Activated CD4-positive, alpha-beta T cell treated with anti-CD3 and anti-CD28 coated beads for 36 hours (primary cell): ENCODE measurements at regions of chr7 and their contacts with region 1.

Region 1: DNA sequence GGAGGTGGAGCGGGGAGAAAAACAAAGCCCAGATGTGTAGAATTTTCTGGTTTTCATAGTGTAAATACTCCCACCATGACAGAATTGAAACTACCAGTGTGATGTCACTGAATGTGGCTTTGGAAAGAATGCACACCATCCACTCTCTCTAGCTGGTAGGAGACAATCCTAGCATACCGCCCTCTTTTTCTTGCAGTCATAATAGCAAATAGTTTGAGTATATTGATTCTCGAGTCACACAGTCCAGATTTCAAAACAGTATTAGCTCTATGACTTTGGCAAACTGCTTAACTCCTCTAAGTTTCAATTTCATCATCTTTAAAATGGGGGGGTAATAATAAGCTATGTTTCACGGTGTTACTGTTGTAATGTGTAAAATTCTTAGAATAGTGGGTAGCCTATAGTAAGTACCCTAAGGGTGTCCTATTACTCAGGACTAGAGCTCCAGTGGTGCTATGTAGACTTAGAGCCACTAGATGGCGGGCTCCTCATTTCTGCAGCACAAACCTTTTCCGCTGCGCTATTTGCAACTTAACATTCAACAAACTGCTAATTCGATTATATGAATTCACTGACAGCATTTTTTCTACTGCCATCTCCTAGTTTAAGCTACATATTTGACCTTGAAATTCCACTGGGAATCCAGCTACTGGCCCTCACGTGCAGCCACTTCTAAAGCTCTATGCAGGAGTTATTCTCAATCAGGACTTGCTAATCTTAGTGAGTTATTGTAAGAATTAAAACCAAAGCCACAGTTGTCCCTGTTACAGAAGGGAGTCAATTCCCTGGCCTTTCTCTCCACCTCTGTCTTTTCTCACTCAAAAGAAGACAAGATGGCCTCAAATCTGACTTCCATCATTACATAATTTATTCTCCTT is 18.7 kb downstream of the TAS2R40 start:
- DNase-seq: peak; percentile 80
- ATAC-seq: peak; percentile 73
- H3K4me3 Mint-ChIP-seq: no peak overlapping the region
- H3K27ac Mint-ChIP-seq: peak overlapping the region; percentile 51
- H3K4me1 Mint-ChIP-seq: peaks cover 28% of the 10 kb centered on the region
- H3K27me3 Mint-ChIP-seq: peaks cover 7% of the 10 kb centered on the region

Region 2: DNA sequence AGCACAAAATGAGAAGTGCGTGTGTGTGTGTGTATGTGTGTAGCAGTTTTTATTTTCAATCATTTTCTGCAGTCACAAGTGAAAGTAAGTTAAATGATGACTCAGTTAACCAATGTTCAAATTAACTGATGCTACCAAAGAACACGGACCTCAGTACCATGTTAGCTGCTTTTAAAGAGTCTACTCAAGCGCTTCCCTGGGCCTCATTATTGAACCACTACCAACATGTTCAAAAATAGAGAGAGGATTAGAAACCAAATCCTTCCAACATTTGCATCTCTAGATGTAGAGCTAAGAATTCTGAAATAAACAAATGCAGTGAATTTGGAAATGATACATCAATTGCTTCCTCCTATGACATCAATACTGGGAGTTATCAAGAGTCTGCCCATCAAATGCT is 57.5 kb before region 1 on chr7 and contains the start of gene TAS2R39:
- CTCF ChIA-PET with region 1: no interaction called
- POLR2A ChIA-PET with region 1: no interaction called
- intact Hi-C with region 1: no loop called
- DNase-seq: no peak
- ATAC-seq: no peak
- H3K4me3 Mint-ChIP-seq: no peak within 1 kb of the TSS
- H3K27ac Mint-ChIP-seq: no peak within 1 kb of the TSS
- H3K4me1 Mint-ChIP-seq: no peaks in the 10 kb centered on the region
- H3K27me3 Mint-ChIP-seq: peaks cover 11% of the 10 kb centered on the region
- total RNA-seq, gene TAS2R39: not detected

Region 3: DNA sequence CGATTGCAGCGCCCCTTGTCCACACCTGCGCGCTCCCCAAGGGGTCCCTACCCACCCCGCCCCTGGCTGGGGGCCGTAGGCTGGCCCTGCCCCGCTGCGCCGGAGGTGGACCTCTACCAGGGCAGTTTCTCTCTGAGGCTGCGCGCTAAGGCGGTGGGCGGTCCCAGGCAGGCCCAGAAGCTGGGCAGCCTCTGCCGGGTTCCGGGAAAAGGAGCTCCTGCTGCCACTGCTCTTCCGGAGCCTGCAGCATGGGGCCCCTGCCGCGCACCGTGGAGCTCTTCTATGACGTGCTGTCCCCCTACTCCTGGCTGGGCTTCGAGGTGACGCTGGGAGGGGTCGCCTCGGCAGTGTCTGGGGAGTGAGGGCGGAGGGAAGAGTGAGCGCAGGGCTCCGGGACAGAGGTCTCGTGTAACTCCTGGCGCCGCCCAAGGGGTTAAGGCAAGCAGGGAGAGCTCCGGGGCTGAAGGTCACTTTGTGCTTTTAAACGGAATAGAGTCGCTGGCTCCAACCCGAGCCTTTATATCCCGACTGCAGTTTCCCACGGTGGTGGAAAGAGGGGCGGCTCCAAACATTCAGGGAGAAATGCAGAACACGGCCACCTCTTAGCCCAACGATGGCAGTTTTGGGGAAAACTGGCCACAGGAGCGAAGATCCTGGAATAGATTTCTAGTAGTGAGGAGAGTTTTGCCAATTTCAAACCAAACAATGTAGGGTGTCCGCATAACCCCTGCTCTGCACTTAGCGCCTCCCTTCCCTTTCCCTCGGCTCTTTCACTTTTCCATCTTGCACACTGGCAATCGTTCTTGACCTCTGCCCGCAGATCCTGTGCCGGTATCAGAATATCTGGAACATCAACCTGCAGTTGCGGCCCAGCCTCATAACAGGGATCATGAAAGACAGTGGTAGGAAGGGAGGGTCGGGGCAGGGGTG is 23.0 kb after region 1 on chr7 and contains the start of gene GSTK1:
- CTCF ChIA-PET with region 1: interaction called, 62 read pairs
- POLR2A ChIA-PET with region 1: interaction called, 7 read pairs
- intact Hi-C with region 1: loop called (anchors 1 to 2 kb)
- DNase-seq: peak; percentile 91
- ATAC-seq: peak; percentile 94
- H3K4me3 Mint-ChIP-seq: peak within 1 kb of the TSS; percentile 98
- H3K27ac Mint-ChIP-seq: peak within 1 kb of the TSS; percentile 98
- H3K4me1 Mint-ChIP-seq: peaks cover 62% of the 10 kb centered on the region
- H3K27me3 Mint-ChIP-seq: no peaks in the 10 kb centered on the region
- total RNA-seq, gene GSTK1: 176 to 219 TPM

Region 4: DNA sequence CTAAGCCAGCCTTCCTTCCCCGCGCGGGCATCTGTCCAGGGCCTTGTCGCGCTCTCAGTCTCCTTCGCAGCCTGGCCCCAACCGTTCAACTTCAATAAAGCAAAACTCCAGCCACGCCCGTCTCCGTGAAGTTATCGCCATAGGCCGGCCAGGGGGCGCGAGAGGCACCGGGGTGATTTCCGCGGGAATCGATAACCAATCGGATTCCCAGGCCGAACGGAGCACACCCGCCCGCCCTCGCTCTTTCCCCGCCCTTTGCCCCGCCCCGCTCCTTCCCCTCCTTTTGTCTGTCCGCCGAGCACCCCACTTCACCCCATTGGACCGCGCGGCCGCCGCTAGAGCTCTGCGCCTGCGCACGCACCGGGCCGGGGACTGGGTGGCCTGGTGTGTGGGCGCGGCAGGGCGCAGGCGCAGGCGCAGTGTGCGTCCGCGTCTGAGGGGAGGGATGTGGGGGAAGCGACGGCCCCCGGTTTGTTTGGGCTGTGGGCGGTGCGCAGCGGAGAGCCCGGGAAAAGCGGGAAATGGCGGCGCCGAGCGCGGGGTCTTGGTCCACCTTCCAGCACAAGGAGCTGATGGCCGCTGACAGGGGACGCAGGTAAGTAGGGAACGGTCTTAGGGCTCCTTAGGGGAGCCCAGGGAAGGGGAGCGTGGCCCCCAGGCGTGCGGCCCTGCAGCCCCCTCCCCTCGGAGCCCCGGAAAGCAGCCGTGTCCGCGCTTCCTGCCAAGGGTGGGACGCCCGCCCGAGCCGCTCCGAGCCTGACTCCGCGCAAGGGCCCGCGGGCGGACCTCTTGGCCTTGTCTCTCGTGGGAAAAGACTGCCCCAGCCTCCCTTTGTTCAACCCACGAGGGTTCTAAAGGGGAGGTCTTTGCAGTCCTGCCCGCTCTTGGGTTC is 47.7 kb after region 1 on chr7 and contains the start of gene CASP2:
- CTCF ChIA-PET with region 1: interaction called, 182 read pairs
- POLR2A ChIA-PET with region 1: interaction called, 10 read pairs
- intact Hi-C with region 1: loop called (anchors 1 kb)
- DNase-seq: peak; percentile 100
- ATAC-seq: peak; percentile 94
- H3K4me3 Mint-ChIP-seq: peak within 1 kb of the TSS; percentile 89
- H3K27ac Mint-ChIP-seq: peak within 1 kb of the TSS; percentile 98
- H3K4me1 Mint-ChIP-seq: peaks cover 46% of the 10 kb centered on the region
- H3K27me3 Mint-ChIP-seq: no peaks in the 10 kb centered on the region
- total RNA-seq, gene CASP2: 91.1 to 106 TPM

Region 5: GRCh38 chr7:143305423-143306070 is 65.0 kb after region 1 on chr7:
- CTCF ChIA-PET with region 1: interaction called, 182 read pairs
- POLR2A ChIA-PET with region 1: interaction called, 11 read pairs
- intact Hi-C with region 1: loop called (anchors 1 kb)
- DNase-seq: peak; percentile 87
- ATAC-seq: peak; percentile 85
- H3K4me3 Mint-ChIP-seq: no peak overlapping the region
- H3K27ac Mint-ChIP-seq: peak overlapping the region; percentile 52
- H3K4me1 Mint-ChIP-seq: peaks cover 48% of the 10 kb centered on the region
- H3K27me3 Mint-ChIP-seq: no peaks in the 10 kb centered on the region

Region 6: DNA sequence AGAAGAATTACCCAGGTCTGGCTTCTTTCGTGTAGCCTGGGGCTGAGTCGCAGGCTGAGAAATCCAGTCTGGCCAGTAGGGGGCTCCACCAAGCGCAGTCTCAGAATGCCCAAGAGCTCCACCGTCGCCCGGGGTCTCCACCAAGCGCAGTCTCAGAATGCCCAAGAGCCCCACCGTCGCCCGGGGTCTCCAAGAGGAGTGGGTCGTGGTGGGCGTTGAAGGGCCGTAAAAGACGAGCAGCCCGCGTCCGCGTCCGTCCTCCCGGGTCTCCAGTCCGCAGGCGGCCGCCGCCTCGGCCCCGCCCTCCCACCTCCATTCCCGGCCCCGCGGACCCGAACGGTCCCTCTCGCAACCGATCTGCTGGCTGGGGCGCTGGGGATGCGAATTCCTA is 139.7 kb after region 1 on chr7:
- CTCF ChIA-PET with region 1: interaction called, 12 read pairs
- POLR2A ChIA-PET with region 1: no interaction called
- intact Hi-C with region 1: loop called in 1 of 2 experiments (anchors 1 kb)
- DNase-seq: peak; percentile 93
- ATAC-seq: peak; percentile 57
- H3K4me3 Mint-ChIP-seq: peak overlapping the region; percentile 82
- H3K27ac Mint-ChIP-seq: peak overlapping the region; percentile 89
- H3K4me1 Mint-ChIP-seq: peaks cover 39% of the 10 kb centered on the region
- H3K27me3 Mint-ChIP-seq: no peaks in the 10 kb centered on the region

Region 7: GRCh38 chr7:143416565-143417149 is 176.1 kb after region 1 on chr7:
- CTCF ChIA-PET with region 1: interaction called, 38 read pairs
- POLR2A ChIA-PET with region 1: no interaction called
- intact Hi-C with region 1: loop called (anchors 1 kb)
- DNase-seq: no peak
- ATAC-seq: peak; percentile 45
- H3K4me3 Mint-ChIP-seq: no peak overlapping the region
- H3K27ac Mint-ChIP-seq: no peak overlapping the region
- H3K4me1 Mint-ChIP-seq: peaks cover 8% of the 10 kb centered on the region
- H3K27me3 Mint-ChIP-seq: no peaks in the 10 kb centered on the region

Region 8: GRCh38 chr7:143504937-143505297 is 264.4 kb after region 1 on chr7:
- CTCF ChIA-PET with region 1: no interaction called
- POLR2A ChIA-PET with region 1: no interaction called
- intact Hi-C with region 1: loop called in 1 of 2 experiments (anchors 5 kb)
- DNase-seq: no peak
- ATAC-seq: no peak
- H3K4me3 Mint-ChIP-seq: no peak overlapping the region
- H3K27ac Mint-ChIP-seq: no peak overlapping the region
- H3K4me1 Mint-ChIP-seq: peaks cover 23% of the 10 kb centered on the region
- H3K27me3 Mint-ChIP-seq: no peaks in the 10 kb centered on the region